ENCODE measurements at regions of chr1 and their contacts with region 1.

Region 1: GRCh38 chr1:107782217-107782845 is 182.6 kb downstream of the VAV3 start:
- DNase-seq: peak; percentile 16
- H3K4me3 Mint-ChIP-seq: no peak overlapping the region
- H3K27ac Mint-ChIP-seq: no peak overlapping the region
- H3K4me1 Mint-ChIP-seq: peaks cover 21% of the 10 kb centered on the region
- H3K27me3 Mint-ChIP-seq: no peaks in the 10 kb centered on the region

Region 2: GRCh38 chr1:107110326-107110725 is 672.0 kb before region 1 on chr1:
- intact Hi-C with region 1: no loop called
- DNase-seq: no peak
- H3K4me3 Mint-ChIP-seq: no peak overlapping the region
- H3K27ac Mint-ChIP-seq: no peak overlapping the region
- H3K4me1 Mint-ChIP-seq: no peaks in the 10 kb centered on the region
- H3K27me3 Mint-ChIP-seq: no peaks in the 10 kb centered on the region

Region 3: DNA sequence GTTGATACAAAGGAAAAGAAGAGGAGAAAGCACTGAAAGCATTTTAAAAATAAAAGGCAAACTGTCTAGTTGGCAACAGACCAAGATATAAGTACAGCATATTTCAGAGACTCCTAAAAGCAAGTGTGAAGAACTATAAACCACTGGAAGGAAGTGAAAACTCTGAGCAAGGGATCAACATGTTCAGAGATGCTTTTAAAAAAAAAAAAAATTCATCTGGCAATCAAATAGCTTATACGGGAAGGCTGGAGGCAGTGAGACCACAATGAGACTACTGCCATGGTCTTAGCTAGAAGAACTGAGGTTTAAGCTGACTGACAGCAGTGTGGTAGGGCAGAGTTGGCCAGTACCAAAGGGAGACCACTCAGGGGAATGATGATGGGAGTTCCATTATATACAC is 58.4 kb after region 1 on chr1:
- intact Hi-C with region 1: no loop called
- DNase-seq: no peak
- H3K4me3 Mint-ChIP-seq: no peak overlapping the region
- H3K27ac Mint-ChIP-seq: no peak overlapping the region
- H3K4me1 Mint-ChIP-seq: peaks cover 48% of the 10 kb centered on the region
- H3K27me3 Mint-ChIP-seq: no peaks in the 10 kb centered on the region

Region 4: DNA sequence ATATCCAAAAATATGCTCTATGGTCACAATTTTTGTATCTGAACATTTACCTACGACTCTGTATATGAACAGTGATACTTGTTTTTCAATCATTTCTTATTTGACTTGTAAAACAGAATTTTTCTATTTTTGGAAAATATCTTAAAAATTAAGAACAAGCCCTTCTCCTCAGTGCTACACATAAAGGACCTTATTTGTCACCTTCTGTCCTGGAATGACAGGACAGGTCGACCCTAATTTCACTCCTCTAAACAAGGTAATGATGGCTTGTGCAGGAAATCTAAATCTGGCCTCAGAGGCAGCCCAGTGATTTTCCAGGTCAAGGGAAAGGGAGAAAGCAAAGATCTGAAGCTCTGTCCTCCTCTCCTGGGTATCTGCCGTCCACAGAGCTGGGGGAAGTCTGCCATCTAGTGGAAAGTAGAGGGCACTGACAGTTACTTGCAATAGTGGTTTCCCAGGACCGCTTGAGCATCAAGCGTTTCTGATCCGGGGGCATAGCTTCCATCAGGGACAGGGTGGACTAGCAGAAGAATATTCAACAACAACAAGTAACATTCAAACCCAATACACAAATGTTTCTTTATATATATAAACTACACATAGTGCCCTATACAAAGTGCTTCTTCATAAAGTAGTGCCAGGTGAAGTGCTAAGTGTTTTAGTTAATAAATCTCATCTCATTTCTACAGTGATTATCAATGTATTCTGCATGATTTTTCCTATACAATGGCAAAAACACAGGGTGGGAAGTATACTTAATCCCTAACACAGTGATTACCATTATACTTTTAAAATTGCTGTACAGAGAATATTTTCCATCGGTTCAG is 343.2 kb after region 1 on chr1:
- intact Hi-C with region 1: loop called (anchors 1 kb)
- DNase-seq: peak; percentile 40
- H3K4me3 Mint-ChIP-seq: no peak overlapping the region
- H3K27ac Mint-ChIP-seq: no peak overlapping the region
- H3K4me1 Mint-ChIP-seq: no peaks in the 10 kb centered on the region
- H3K27me3 Mint-ChIP-seq: peaks cover 3% of the 10 kb centered on the region

Region 5: DNA sequence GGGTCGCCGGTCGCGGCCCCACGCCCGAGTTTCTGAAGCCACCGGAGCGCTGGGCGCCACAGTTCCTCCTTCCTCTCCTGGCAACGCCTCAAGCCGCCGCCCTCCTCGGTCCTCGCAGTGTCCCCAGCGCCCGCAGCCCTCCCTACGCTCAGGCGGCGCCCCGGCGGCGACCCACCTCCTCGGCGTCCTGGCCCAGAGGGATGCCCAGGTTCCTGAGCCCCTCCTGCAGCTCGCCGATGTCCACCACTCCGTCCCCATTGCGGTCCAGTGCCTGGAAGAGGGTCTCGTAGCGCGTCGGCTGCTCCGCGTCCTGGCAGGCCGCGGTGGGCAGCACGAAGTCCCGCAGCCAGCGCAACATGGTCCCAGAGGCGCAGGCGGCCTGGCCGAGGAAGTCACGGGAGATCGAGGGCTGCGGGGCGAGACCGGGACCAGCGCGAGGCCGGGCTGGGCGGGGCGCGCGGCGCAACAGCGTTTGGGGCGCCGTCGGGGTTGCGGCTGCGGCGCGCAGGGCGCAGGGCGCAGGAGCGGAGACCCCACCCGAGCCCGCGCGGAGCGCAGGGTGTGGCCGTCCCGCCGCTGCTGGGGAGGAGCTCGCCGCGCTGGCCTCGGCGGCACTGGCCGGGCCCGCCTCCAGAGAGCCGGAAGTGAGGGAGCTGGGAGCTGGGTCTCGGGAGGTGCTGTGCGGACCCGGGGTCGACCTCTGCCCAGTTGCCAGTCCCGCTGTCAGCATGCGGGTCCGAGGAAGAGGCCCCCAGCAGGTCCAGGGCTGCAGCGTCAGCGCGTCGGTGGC is 417.6 kb after region 1 on chr1 and contains the start of gene SLC25A24:
- intact Hi-C with region 1: loop called (anchors 1 kb)
- DNase-seq: peak; percentile 83
- H3K4me3 Mint-ChIP-seq: peak within 1 kb of the TSS; percentile 91
- H3K27ac Mint-ChIP-seq: peak within 1 kb of the TSS; percentile 78
- H3K4me1 Mint-ChIP-seq: peaks cover 38% of the 10 kb centered on the region
- H3K27me3 Mint-ChIP-seq: peaks cover 7% of the 10 kb centered on the region
- total RNA-seq, gene SLC25A24: 14.6 and 16.6 TPM in 2 replicates